ENCODE measurements at regions of chr6 and their contacts with region 1.

Region 1: DNA sequence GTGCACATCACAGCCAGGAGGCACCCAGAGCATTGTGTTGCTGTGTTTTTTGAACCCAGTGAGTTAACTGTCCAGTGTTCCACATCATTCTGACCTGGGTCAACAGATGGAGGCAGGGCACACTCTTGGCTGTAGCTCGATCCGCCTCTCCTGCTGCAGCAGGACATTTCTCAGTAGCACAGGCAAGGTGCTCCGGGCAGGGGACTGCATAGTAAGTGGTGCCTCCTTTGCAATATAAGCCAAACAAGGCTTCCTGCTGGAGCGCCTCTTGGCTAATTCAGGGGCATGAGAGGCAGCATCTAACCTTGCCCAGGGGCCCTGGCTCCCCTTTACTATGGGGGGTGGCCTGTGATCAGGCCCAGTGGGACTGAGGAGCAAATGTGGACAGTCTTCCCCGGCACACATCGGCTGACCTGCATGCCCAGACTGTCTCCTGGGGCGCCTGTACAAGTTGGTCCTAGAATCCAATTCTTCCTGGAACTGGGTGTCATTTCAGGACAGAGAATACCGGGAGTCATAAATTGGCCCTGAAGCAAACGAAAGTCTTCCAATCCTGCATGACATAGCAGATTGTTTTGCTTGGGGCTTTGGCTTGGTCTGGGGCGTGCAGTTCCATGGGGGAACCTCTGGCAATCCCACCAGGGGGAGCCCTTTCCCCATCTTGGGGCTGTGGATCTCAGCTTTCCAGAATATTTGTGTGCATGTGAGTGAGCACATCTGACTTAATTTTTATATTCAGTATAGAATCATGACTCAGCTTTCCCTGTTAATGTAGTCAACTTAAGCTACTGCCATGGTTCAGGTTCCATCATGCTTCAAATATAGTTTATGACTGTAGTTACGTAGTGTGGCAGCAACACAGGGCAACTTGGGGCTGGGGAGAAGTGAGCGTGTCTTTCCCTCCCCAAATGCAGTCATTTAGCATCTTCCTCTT is 56.0 kb upstream of the DDR1 start:
- DNase-seq: peak; percentile 81
- ATAC-seq: peak; percentile 76
- H3K4me3 Mint-ChIP-seq: peak overlapping the region; percentile 87
- H3K27ac Mint-ChIP-seq: peak overlapping the region; percentile 72
- H3K4me1 Mint-ChIP-seq: peaks cover 53% of the 10 kb centered on the region
- H3K27me3 Mint-ChIP-seq: no peaks in the 10 kb centered on the region

Region 2: DNA sequence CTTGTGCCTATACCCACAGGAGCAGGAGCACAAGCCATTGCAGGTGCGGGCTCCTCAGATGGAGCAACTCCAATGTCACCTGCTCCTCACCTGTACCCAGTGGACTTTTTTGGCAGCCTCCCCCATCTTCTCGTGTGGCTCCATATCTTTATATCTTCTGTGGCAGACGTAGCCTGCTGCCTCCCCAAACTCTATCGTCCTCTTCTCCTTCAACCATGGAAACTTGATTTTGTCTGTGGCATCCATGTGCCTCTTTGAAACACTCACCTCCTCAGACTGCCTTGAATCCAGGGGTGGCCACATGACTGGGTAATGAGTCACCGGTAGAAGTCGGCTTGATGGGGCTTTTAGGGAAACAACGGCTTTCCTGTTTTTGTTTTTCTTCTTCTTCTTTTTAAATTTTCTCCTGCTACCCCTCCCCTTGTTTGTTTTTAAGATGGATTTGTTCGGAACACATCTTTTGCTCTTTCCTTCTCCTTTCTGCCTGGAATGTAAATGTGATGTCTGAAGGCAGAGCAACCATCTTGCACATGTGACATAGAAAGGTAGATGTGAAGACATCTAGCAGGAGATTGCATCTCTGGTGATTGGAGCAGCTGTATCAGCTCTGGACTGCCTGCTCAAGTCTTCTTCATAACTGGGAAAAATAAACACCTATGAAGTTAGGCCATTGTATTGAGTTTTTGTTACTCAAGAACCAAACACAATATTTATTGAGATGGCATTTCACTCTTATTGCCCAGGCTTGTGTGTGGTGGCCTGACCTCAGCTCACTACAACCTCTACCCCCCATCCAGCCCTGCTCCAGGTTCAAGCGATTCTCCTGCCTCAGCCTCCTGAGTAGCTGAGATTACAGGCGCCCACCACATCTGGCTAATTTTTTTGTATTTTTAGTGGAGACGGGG is 13.9 kb before region 1 on chr6:
- POLR2A ChIA-PET with region 1: interaction called, 10 read pairs
- DNase-seq: no peak
- ATAC-seq: peak; percentile 69
- H3K4me3 Mint-ChIP-seq: peak overlapping the region; percentile 59
- H3K27ac Mint-ChIP-seq: peak overlapping the region; percentile 93
- H3K4me1 Mint-ChIP-seq: peaks cover 53% of the 10 kb centered on the region
- H3K27me3 Mint-ChIP-seq: no peaks in the 10 kb centered on the region

Region 3: DNA sequence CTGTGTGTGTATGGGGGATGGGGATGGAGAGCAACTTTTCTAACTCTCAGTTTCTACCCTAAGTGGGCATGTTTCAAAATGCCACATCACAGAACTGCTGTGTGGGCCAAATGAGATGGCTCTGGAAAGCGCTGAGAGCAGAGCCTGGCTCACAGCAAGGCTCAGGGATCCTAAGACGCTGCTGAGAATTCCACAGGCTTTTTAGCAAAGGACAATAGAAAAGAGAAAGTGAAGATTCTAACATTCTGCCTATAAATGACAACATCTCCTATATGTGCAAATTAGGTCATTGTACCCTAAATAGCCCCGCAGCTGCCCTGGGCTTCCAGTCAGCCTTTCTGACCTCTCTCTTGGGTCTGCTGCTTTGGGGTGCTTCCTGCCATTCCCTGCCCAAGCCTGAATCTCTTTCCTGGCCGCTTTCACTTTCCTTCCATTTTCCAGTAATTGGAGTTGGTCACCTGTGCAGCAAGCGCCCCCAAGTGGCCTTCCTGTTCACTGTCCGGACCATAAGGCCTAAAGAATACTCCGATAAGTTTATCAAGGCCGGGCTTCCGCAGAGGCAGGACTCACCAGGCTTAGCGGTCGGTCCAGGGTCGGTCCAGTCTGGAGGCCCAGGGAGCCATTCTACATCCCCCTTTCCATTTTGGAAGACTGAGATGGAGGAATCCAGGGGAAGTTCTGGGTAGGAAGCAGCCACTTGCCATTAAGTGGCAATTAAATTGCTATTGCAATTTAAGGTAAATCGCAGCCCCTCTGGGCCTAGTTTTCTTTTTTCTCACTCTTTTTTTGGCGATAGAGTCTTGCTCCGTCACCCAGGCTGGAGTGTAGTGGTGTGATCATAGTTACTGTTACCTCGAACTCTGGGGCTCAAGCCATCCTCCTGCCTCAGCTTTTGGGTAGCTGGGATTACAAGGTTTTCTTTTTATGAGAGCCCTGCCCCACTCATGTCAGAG is 49.4 kb after region 1 on chr6:
- POLR2A ChIA-PET with region 1: interaction called, 20 read pairs
- DNase-seq: peak; percentile 80
- ATAC-seq: peak; percentile 88
- H3K4me3 Mint-ChIP-seq: peak overlapping the region; percentile 81
- H3K27ac Mint-ChIP-seq: peak overlapping the region; percentile 80
- H3K4me1 Mint-ChIP-seq: peaks cover 29% of the 10 kb centered on the region
- H3K27me3 Mint-ChIP-seq: peaks cover 2% of the 10 kb centered on the region

Region 4: GRCh38 chr6:31513456-31514165 is 685.3 kb after region 1 on chr6:
- POLR2A ChIA-PET with region 1: no interaction called
- DNase-seq: no peak
- ATAC-seq: no peak
- H3K4me3 Mint-ChIP-seq: no peak overlapping the region
- H3K27ac Mint-ChIP-seq: no peak overlapping the region
- H3K4me1 Mint-ChIP-seq: peaks cover 2% of the 10 kb centered on the region
- H3K27me3 Mint-ChIP-seq: peaks cover 12% of the 10 kb centered on the region

Measured in activated naive CD8-positive, alpha-beta T cell treated with anti-CD3 and anti-CD28 coated beads, Interleukin-2, amount 10 ng/mL, durations not matched to agents 7 days and 5 days (primary cell).